Calu3 (cell line): ENCODE measurements at regions of chr9 and their contacts with region 1.

Region 1: DNA sequence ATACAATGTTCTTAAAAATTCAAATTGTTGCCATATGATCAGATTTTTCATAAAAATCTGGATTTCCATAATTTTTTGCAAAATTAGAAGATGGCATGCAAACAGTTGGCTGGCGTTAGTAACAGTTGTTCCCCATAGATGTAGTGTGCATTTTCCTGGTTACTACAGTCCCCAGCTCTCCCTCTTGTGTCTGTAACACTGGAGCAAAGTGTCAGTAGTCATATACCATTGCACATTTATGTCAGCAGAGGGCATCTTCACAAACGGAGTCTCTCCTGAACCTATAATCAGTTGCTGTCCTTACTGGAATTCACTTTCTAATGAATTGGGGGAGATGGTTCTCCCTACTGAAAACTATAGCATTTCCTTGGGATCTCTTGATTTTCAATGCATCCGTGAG is 44.7 kb upstream of the DMAC1 start:
- DNase-seq: peak; percentile 4
- H3K4me3 Mint-ChIP-seq: no peak overlapping the region
- H3K27ac Mint-ChIP-seq: no peak overlapping the region
- H3K4me1 Mint-ChIP-seq: no peaks in the 10 kb centered on the region
- H3K27me3 Mint-ChIP-seq: no peaks in the 10 kb centered on the region
- CTCF ChIP-seq: no peak

Region 2: GRCh38 chr9:7560669-7561305 is 283.5 kb before region 1 on chr9:
- CTCF ChIA-PET with region 1: no interaction called
- intact Hi-C with region 1: loop called (anchors 10 kb)
- DNase-seq: no peak
- H3K4me3 Mint-ChIP-seq: no peak overlapping the region
- H3K27ac Mint-ChIP-seq: no peak overlapping the region
- H3K4me1 Mint-ChIP-seq: no peaks in the 10 kb centered on the region
- H3K27me3 Mint-ChIP-seq: peaks cover 34% of the 10 kb centered on the region
- CTCF ChIP-seq: no peak

Region 3: GRCh38 chr9:7935681-7936080 is 91.4 kb after region 1 on chr9:
- CTCF ChIA-PET with region 1: no interaction called
- intact Hi-C with region 1: no loop called
- DNase-seq: no peak
- H3K4me3 Mint-ChIP-seq: no peak overlapping the region
- H3K27ac Mint-ChIP-seq: no peak overlapping the region
- H3K4me1 Mint-ChIP-seq: no peaks in the 10 kb centered on the region
- H3K27me3 Mint-ChIP-seq: no peaks in the 10 kb centered on the region
- CTCF ChIP-seq: no peak

Region 4: DNA sequence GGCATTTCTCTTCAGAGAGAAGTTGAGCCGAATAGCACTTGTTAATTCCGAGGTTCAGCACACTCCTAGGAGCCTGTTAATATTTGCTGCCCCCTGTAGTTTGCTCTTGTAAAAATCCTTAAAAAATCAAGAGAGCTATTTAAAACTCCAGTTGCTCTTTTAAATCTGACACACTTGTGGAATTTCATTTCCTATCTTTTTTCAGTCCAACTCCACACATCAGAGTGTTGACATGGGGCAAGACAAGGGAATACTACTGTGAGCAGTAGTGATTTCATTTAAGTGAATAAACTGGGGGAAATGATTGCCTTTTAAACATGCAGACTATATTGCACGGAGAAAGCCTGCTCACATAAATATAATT is 1051.6 kb after region 1 on chr9:
- CTCF ChIA-PET with region 1: no interaction called
- intact Hi-C with region 1: loop called (anchors 10 kb)
- DNase-seq: peak; percentile 3
- H3K4me3 Mint-ChIP-seq: no peak overlapping the region
- H3K27ac Mint-ChIP-seq: no peak overlapping the region
- H3K4me1 Mint-ChIP-seq: no peaks in the 10 kb centered on the region
- H3K27me3 Mint-ChIP-seq: no peaks in the 10 kb centered on the region
- CTCF ChIP-seq: no peak